ENCODE measurements at regions of chrX and their contacts with region 1.

Region 1: DNA sequence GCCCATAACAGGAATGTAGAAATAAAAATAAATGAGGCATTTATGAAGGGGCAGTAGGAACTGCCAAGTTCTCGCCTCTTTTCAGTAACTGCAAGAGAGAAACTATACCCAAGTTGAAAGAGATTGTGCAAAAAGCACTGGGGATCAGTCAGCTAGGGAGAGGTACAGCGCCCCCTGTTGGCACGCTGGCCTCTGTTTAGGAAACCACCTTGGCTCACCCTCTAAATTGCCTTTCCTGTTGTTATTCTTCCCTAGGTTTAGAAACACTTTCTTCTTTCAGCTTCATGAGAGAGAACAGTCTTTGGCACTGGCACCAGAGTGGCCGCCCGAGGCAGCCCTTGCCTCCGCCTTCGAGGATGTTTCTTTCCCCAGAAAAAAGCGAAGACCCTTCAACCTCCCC is 348.5 kb downstream of the MID1IP1 start:
- DNase-seq: peak; percentile 76
- H3K4me3 Mint-ChIP-seq: no peak overlapping the region
- H3K27ac Mint-ChIP-seq: no peak overlapping the region
- H3K4me1 Mint-ChIP-seq: no peaks in the 10 kb centered on the region
- H3K27me3 Mint-ChIP-seq: no peaks in the 10 kb centered on the region

Region 2: GRCh38 chrX:38664285-38664684 is 485.5 kb before region 1 on chrX:
- CTCF ChIA-PET with region 1: no interaction called
- intact Hi-C with region 1: loop called (anchors 2 kb)
- DNase-seq: peak; percentile 18
- H3K4me3 Mint-ChIP-seq: no peak overlapping the region
- H3K27ac Mint-ChIP-seq: no peak overlapping the region
- H3K4me1 Mint-ChIP-seq: no peaks in the 10 kb centered on the region
- H3K27me3 Mint-ChIP-seq: no peaks in the 10 kb centered on the region

Region 3: GRCh38 chrX:38768079-38768478 is 381.7 kb before region 1 on chrX:
- CTCF ChIA-PET with region 1: interaction called, 6 read pairs
- intact Hi-C with region 1: loop called (anchors 5 kb)
- DNase-seq: no peak
- H3K4me3 Mint-ChIP-seq: no peak overlapping the region
- H3K27ac Mint-ChIP-seq: no peak overlapping the region
- H3K4me1 Mint-ChIP-seq: no peaks in the 10 kb centered on the region
- H3K27me3 Mint-ChIP-seq: no peaks in the 10 kb centered on the region

Region 4: DNA sequence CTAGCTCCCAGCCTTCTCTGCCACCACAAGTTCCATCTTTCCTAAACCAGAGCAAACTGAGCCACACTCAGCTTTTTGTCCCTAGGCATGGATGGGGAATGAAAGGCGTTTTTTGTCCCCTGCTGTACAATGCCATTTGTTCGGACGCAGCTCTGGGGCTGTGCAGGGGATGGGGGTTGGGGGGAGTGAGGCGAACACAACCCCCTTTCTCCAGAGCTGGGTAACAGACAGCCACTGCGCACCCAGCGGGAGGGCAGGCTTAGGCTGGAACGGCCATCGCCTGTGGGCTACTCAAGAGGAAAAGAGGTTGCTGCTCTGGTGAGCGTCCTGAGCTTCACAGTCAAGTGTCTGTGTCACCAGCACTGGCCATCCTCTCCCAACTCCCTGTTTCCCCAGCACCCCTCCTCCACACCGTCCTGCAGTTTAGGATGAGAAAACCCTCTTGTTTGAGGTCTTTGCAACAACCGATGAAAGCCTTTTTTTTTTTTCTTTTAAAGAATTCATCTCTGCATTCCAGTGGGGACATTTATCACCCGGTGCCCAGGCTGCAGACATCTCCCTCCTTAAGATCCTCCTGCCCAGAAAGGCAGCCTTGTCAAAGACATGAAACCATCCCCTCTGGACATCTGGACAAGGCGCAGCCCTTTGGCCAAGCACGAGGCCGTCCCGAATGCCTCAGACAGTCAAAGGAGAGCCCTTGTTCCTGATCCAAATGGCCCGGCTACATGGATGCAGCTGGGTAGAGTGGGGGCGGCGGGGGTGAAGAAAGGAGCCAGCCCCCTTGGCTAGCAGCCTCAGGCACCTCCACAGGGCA is 528.4 kb after region 1 on chrX:
- CTCF ChIA-PET with region 1: no interaction called
- intact Hi-C with region 1: no loop called
- DNase-seq: no peak
- H3K4me3 Mint-ChIP-seq: no peak overlapping the region
- H3K27ac Mint-ChIP-seq: no peak overlapping the region
- H3K4me1 Mint-ChIP-seq: no peaks in the 10 kb centered on the region
- H3K27me3 Mint-ChIP-seq: no peaks in the 10 kb centered on the region

Region 5: DNA sequence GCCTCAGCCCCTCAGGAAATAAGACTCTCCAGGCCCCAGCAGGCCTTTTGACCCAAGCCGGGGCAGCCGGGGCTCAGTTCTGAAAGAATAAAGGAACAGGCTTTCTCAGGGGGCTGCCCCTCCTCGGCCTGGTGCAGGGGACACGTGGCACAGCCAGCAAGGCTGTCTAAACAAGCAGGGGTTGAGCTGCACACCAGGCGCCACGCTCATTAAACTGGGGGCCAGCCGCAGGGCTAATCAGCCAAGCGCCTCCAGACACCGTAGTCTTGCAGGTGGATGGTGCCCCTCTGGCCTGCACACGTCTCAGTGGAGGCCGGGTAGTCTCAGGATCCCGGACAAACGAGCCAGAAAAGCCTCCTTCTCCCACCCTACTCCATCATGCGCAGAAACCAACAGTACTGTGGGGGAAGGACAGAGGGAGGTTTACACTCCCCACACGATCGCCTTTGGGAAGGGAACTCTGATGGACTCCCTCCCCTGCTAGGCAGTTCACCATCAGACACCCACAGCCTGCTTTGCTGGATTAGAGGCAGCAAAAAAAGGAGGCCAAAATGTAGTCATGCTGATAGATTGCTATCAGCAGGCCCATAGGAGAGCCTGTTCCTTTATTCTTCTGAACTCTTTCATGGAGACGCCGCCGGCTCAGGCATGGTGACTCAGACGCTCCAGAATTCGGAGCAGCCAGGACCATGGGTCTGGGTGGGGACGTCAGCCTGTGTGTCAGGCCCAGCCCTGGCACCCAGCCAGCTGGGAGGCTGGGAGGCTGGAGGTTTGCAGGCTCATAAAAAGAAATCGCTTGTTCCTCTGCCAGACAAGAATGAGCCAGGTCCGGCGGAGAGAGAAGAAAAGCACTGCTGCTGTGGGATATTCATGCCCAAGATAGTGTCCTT is 605.6 kb after region 1 on chrX:
- CTCF ChIA-PET with region 1: no interaction called
- intact Hi-C with region 1: no loop called
- DNase-seq: no peak
- H3K4me3 Mint-ChIP-seq: no peak overlapping the region
- H3K27ac Mint-ChIP-seq: no peak overlapping the region
- H3K4me1 Mint-ChIP-seq: peaks cover 7% of the 10 kb centered on the region
- H3K27me3 Mint-ChIP-seq: no peaks in the 10 kb centered on the region

Measured in activated naive CD4-positive, alpha-beta T cell treated with anti-CD3 and anti-CD28 coated beads for 36 hours (primary cell).